MCF 10A (cell line): ENCODE measurements at regions of chr6 and their contacts with region 1.

Region 1: DNA sequence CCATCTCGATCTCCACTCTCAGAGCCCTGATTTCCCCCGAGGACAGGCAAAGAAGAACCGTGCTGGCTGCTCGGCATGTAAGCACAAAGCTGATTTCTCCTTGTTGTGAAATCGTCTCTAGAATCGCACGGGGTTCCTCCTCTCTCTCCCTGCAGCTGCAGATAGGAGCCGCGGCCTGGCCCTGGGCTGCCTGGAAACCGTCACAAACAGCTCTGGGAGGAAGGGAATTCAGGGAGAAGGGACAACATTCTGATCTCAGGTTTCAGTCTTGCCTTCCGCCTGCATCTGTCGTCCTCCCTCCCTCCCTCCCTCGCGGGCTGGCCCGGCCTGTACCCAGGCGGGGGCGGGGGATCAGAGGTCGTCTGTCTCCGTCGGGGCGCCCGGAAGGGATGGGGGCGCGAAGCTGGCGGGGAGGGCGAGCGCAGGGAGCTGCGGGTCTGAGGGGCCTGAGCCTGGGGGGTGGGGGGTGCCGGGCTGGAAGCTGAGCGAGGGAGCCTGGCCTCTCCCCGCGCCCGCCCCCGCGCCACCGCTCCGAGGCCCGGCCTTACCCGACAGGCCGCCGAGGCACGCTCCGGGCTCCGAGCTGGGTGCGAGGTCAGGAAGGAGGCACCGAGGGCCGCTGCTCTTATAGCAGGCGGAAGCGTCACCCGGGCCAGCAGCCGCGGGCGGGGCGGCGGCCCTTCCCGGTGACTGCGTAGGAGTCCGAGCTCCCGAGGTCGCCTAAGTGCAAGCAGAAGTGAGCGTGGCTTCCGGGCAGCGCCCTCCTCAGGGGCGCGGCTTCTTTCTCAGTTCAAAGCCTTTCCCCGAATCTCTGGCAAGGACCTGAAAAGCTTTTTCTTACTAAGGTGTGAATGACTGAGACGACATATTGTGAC is at the start of gene SERPINB1:
- DNase-seq: peak; percentile 93
- H3K4me3 Mint-ChIP-seq: peak within 1 kb of the TSS; percentile 88
- H3K27ac Mint-ChIP-seq: peak within 1 kb of the TSS; percentile 96
- H3K4me1 Mint-ChIP-seq: peaks cover 31% of the 10 kb centered on the region
- H3K27me3 Mint-ChIP-seq: no peaks in the 10 kb centered on the region
- CTCF ChIP-seq: no peak
- total RNA-seq, gene SERPINB1: 20.8 and 28.0 TPM in 2 replicates

Region 2: GRCh38 chr6:2403546-2403945 is 438.0 kb before region 1 on chr6:
- CTCF ChIA-PET with region 1: no interaction called
- POLR2A ChIA-PET with region 1: no interaction called
- intact Hi-C with region 1: no loop called
- DNase-seq: no peak
- H3K4me3 Mint-ChIP-seq: no peak overlapping the region
- H3K27ac Mint-ChIP-seq: no peak overlapping the region
- H3K4me1 Mint-ChIP-seq: no peaks in the 10 kb centered on the region
- H3K27me3 Mint-ChIP-seq: no peaks in the 10 kb centered on the region
- CTCF ChIP-seq: no peak

Region 3: DNA sequence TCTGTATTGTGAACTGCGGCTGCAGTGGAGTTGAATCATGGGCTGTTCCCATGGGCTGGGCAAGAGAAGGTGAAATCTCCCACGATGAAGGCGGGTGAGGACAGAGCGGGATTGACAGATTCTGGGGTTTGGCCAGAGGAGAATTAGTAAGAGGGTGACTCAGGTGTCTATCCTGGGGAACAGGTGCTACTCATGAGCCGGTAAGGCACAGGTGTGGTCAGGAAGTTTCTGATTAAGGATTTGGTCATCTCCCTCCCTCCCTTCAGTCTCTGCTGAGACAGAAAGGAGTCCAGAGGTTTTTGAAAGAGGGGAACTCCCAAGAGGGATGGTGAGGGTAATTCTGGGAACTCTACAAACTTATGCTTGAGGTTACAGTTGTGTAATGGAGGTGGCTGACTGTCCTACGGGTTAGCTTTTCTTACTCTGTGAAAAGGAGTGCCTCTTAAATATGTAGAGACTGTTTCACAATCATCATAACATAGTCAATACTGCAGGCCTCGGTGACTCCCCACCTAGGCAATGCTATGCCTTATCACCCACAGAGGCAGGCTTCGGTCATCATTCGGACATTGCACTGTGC is 31.3 kb before region 1 on chr6:
- CTCF ChIA-PET with region 1: interaction called, 6 read pairs
- POLR2A ChIA-PET with region 1: interaction called, 29 read pairs
- intact Hi-C with region 1: loop called (anchors 1 kb)
- DNase-seq: peak; percentile 99
- H3K4me3 Mint-ChIP-seq: peak overlapping the region; percentile 24
- H3K27ac Mint-ChIP-seq: peak overlapping the region; percentile 84
- H3K4me1 Mint-ChIP-seq: peaks cover 24% of the 10 kb centered on the region
- H3K27me3 Mint-ChIP-seq: no peaks in the 10 kb centered on the region
- CTCF ChIP-seq: no peak

Region 4: GRCh38 chr6:2818593-2818992 is 22.9 kb before region 1 on chr6:
- CTCF ChIA-PET with region 1: interaction called, 7 read pairs
- POLR2A ChIA-PET with region 1: interaction called, 76 read pairs
- intact Hi-C with region 1: loop called (anchors 1 kb)
- DNase-seq: no peak
- H3K4me3 Mint-ChIP-seq: no peak overlapping the region
- H3K27ac Mint-ChIP-seq: peak overlapping the region; percentile 90
- H3K4me1 Mint-ChIP-seq: peaks cover 28% of the 10 kb centered on the region
- H3K27me3 Mint-ChIP-seq: no peaks in the 10 kb centered on the region
- CTCF ChIP-seq: no peak

Region 5: DNA sequence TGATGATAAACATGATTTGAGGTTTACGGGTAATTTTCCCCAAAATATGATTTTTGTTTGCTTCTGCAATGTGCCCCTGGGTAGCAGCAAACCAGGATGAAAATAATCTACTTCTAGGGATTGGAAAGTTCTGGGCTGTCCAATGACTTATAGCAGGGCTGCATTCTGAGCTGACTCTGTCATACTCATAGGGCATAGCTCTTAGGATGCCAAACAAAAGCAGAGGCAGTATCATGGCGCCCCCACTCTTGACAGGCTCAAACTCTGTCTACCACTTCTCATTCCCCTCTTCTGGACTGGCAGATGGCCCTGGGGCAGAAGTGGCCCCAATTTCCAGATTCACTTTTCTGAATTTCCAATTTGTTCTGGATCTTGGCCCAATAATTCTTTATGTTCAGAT is 10.1 kb before region 1 on chr6:
- CTCF ChIA-PET with region 1: interaction called, 6 read pairs
- POLR2A ChIA-PET with region 1: interaction called, 22 read pairs
- intact Hi-C with region 1: no loop called
- DNase-seq: no peak
- H3K4me3 Mint-ChIP-seq: no peak overlapping the region
- H3K27ac Mint-ChIP-seq: no peak overlapping the region
- H3K4me1 Mint-ChIP-seq: no peaks in the 10 kb centered on the region
- H3K27me3 Mint-ChIP-seq: no peaks in the 10 kb centered on the region
- CTCF ChIP-seq: no peak

Region 6: DNA sequence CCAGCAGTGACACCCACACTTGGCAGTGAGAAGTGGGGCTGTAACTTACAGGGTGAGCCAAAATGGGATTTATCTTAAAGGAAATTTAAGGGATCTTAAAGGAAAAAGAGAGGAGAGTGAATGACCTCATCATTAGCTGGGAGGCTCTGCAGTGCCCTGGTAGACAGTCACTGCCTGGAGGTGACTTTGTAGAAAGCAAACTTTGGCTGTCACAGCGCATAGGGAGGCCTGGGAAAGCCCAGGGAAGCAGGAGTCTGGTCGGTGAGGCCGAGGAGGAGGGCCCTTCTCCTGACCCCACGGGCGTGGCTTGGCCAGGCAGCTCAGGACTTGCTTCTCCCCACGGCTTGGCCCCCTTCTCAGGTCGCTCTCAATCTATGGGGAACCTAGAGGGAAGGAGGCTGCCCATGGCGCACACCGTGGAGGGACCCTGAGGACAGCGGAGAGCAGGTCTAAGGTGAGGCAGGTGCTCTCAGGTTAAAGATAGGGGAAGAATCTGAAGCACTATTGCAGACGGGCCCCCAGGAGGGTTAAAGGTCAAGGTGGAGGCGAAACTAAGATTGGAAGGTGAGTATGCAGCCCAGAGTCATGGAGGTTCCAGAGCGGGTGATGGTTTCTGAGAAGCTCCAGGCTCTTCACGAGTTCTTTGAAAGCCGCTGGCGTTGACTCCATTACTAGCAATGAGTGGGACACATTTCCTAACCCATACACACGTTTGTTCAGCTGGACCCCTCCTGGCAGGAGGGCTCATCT is 211.2 kb after region 1 on chr6:
- CTCF ChIA-PET with region 1: no interaction called
- POLR2A ChIA-PET with region 1: no interaction called
- intact Hi-C with region 1: loop called (anchors 10 kb)
- DNase-seq: no peak
- H3K4me3 Mint-ChIP-seq: no peak overlapping the region
- H3K27ac Mint-ChIP-seq: no peak overlapping the region
- H3K4me1 Mint-ChIP-seq: no peaks in the 10 kb centered on the region
- H3K27me3 Mint-ChIP-seq: no peaks in the 10 kb centered on the region
- CTCF ChIP-seq: no peak